Activated CD8-positive, alpha-beta memory T cell treated with anti-CD3 and anti-CD28 coated beads, Interleukin-2, amount 10 ng/mL, durations not matched to agents 7 days and 5 days (primary cell): ENCODE measurements at regions of chr20 and their contacts with region 1.

Region 1: GRCh38 chr20:38875175-38875993 is 50.8 kb upstream of the FAM83D start:
- DNase-seq: peak; percentile 89
- ATAC-seq: peak; percentile 43
- H3K4me3 Mint-ChIP-seq: peak overlapping the region; percentile 61
- H3K27ac Mint-ChIP-seq: peak overlapping the region; percentile 90
- H3K4me1 Mint-ChIP-seq: peaks cover 95% of the 10 kb centered on the region
- H3K27me3 Mint-ChIP-seq: no peaks in the 10 kb centered on the region

Region 2: DNA sequence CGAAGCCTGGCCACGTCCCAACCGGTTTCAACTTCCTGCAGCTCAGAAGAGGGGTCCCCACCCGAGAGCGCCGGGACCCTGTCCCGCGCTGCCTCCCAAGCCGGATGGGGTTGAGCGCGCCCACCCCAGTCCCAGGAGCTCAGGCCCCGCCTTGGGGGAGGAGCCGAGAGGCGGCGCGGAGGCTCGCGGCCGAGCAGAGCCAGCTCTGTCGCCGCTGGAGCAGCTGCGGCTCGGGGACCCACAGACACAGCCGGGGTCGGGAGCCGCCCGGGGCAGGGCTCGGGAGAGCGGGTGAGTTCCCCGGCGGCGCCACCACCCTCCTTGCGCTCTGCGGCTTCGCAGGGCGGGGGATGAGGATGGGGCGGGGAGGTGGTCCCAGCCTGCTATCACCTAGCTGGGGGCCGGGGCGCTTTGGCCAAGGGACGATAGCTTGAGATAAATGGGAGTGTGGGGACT is 69.9 kb before region 1 on chr20 and contains the start of gene PPP1R16B:
- CTCF ChIA-PET with region 1: interaction called, 28 read pairs
- DNase-seq: peak; percentile 93
- ATAC-seq: peak; percentile 86
- H3K4me3 Mint-ChIP-seq: peak within 1 kb of the TSS; percentile 88
- H3K27ac Mint-ChIP-seq: peak within 1 kb of the TSS; percentile 98
- H3K4me1 Mint-ChIP-seq: peaks cover 57% of the 10 kb centered on the region
- H3K27me3 Mint-ChIP-seq: no peaks in the 10 kb centered on the region
- total RNA-seq, gene PPP1R16B: 86.5 to 128 TPM

Region 3: GRCh38 chr20:38842558-38842981 is 32.8 kb before region 1 on chr20:
- CTCF ChIA-PET with region 1: interaction called, 12 read pairs
- DNase-seq: peak; percentile 62
- ATAC-seq: no peak
- H3K4me3 Mint-ChIP-seq: peak overlapping the region; percentile 32
- H3K27ac Mint-ChIP-seq: peak overlapping the region; percentile 77
- H3K4me1 Mint-ChIP-seq: peaks cover 85% of the 10 kb centered on the region
- H3K27me3 Mint-ChIP-seq: no peaks in the 10 kb centered on the region

Region 4: GRCh38 chr20:38863024-38863851 is 12.1 kb before region 1 on chr20:
- CTCF ChIA-PET with region 1: interaction called, 14 read pairs
- DNase-seq: peak; percentile 82
- ATAC-seq: peak; percentile 84
- H3K4me3 Mint-ChIP-seq: peak overlapping the region; percentile 21
- H3K27ac Mint-ChIP-seq: peak overlapping the region; percentile 84
- H3K4me1 Mint-ChIP-seq: peaks cover 77% of the 10 kb centered on the region
- H3K27me3 Mint-ChIP-seq: no peaks in the 10 kb centered on the region

Region 5: DNA sequence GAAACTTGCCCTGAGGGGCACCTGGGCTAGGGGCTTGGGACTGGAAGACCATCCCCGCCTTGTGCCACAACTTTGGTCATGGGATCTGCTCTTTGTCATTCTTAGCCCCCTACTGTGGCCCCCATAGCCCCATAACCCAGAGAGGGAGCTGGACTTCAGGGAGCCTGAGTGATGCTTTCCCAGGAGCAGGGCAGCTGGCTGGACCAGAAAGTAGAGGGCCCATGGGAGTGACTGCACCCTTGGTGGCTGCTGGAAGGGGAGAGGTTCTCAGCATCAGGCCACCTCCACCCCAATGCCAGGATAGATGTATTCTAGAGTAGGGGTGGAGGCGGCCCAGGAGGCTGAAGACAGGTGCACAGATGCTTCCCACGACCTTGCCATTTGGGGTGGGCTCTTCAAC is 45.0 kb after region 1 on chr20:
- CTCF ChIA-PET with region 1: no interaction called
- DNase-seq: no peak
- ATAC-seq: no peak
- H3K4me3 Mint-ChIP-seq: no peak overlapping the region
- H3K27ac Mint-ChIP-seq: no peak overlapping the region
- H3K4me1 Mint-ChIP-seq: peaks cover 9% of the 10 kb centered on the region
- H3K27me3 Mint-ChIP-seq: no peaks in the 10 kb centered on the region